ENCODE measurements at regions of chr6 and their contacts with region 1.

Region 1: DNA sequence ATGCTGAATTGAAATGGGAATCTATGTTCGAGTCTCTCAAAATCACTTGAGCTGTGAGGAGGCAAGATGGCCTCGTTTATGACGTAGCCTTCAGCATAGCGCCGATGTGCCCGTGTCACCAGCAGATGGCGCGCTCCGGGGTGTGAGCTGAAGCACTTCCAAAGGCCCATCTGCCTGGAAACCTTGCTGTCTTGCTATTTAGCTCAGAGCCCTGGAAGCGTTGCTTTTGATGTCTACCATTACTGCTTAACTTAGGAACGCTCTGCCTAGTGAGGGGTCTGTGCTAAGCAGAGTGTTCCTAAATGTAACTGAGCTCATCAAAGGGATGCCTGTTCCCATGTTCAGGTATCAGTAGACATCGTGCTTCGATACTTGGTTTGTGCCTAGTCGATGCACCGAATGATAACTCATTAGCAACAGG is 67.7 kb downstream of the SYCP2L start:
- DNase-seq: peak; percentile 81
- H3K4me3 ChIP-seq: no peak overlapping the region
- H3K27ac ChIP-seq: no peak overlapping the region
- H3K4me1 ChIP-seq: peaks cover 8% of the 10 kb centered on the region
- H3K27me3 ChIP-seq: no peaks in the 10 kb centered on the region

Region 2: DNA sequence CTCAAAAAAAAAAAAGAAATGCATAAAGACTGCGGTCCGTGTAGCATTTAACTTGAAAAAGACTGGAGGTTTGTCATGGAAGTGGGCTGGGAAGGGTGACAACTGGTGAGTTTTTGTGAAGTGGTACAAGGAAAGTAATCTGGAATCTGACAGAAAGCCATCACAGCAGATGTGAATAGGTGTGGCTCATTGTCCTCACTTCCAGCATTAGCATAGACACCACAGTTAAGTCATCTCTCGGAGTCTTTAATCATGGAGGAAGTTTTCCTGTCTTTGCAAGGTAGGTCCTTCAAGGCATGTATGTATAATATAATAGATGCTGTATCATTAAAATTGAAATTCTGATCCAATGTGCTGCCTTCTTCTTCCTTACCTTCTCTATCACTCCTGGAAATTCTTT is 992.9 kb before region 1 on chr6:
- in situ Hi-C with region 1: no loop called
- DNase-seq: no peak
- H3K4me3 ChIP-seq: no peak overlapping the region
- H3K27ac ChIP-seq: no peak overlapping the region
- H3K4me1 ChIP-seq: no peaks in the 10 kb centered on the region
- H3K27me3 ChIP-seq: no peaks in the 10 kb centered on the region

Region 3: DNA sequence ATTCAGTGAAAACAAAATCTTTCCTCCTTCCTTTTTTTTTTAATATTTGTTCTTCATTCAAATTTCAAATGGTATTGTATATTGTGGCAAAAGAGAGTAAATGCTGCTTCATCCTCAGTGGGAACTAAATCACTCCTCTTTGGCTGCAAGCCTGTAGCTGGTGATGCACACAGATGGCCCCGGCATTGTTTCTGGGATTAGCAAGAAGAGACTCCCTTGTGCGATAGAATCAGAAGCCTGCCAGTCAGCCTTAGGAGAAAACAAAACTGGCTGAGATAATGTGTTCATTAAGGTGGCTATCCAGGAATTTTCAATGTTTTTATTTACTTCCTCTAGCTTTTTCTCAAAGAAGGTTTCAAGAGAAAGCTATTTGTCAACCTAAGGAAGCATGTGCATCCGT is 110.2 kb after region 1 on chr6:
- in situ Hi-C with region 1: loop called (anchors 5 kb)
- DNase-seq: peak; percentile 51
- H3K4me3 ChIP-seq: no peak overlapping the region
- H3K27ac ChIP-seq: no peak overlapping the region
- H3K4me1 ChIP-seq: no peaks in the 10 kb centered on the region
- H3K27me3 ChIP-seq: no peaks in the 10 kb centered on the region

Region 4: GRCh38 chr6:11251541-11252360 is 297.2 kb after region 1 on chr6:
- in situ Hi-C with region 1: no loop called
- DNase-seq: peak; percentile 79
- H3K4me3 ChIP-seq: no peak overlapping the region
- H3K27ac ChIP-seq: no peak overlapping the region
- H3K4me1 ChIP-seq: peaks cover 11% of the 10 kb centered on the region
- H3K27me3 ChIP-seq: no peaks in the 10 kb centered on the region

Region 5: DNA sequence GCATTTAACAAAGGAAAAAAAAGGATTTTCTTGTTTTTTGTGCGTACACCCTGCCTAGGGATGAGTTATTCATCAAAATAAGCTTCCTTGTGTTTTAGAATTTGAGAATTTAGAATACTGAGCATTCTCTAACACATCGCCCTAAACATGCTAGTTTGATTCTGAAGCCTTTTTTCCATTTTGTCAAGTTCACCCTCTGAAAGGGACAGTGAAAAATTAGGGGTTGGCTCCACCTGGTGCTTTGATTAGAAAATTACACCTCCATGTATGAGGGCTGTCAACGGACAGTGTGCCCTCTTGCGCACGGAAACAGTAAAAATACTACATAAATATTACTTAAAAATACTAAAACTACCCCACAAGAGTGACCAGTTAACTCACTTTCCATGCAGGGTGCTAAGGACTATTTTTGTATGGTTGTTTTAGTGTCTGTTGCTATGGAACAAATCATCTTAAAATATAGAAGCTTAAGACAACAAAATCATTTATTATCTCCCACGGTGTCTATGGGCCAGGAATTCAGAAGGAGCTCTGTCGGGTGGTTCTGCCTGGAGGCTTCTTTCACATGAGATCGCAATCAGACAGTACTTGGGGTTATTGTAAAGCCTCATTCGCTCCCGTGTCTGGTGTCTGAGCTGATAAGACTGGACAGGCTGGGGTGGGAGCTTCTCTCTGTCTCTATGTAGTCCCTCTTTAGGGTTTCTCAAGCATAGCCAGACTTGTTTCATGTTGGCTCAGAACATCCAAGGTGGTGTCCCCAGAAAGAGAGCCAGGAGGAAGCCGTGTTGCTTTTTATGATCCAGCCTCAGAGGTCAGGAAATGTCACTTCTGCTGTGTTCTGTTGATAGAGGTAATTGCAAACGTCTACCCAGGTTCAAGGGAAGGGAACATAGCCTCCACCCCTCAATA is 541.8 kb after region 1 on chr6:
- in situ Hi-C with region 1: loop called (anchors 25 kb)
- DNase-seq: peak; percentile 86
- H3K4me3 ChIP-seq: no peak overlapping the region
- H3K27ac ChIP-seq: no peak overlapping the region
- H3K4me1 ChIP-seq: peaks cover 10% of the 10 kb centered on the region
- H3K27me3 ChIP-seq: no peaks in the 10 kb centered on the region